Tibial artery (tissue), 4 donors: ENCODE measurements at regions of chr7 and their contacts with region 1.

Region 1: DNA sequence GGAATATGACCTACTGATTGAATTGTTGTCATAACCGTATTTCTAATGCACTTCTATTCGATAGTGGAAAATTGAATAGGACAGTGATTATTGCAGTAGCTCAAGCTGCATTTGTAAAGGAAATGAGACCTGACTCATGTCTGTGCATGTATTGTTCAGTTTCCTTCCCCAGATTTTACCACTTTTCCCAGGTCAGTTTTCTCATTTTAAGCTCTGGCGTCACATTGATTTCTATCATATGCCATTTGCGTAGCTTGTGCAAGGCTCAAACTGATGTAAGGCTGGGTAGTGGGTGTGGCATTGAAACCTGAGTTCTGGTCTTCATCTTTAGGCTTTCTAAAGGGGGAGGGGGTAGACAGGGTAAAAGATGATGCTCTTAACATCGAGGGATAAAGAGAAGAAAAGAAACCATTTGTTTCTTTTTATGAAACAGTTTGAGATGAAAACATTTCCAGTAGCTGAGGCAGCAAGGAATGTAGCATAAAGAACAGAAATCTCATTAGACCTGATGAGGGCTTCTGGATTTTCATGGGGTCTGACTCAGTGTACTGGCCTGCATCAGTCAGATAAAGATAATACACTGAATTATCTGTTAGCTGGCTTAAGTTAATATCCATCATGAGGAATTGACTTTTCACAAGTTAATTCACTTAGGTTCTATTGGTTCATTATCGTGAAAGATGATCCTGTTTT is 182.3 kb upstream of the CDCA7L start:
- DNase-seq: no peak
- H3K4me3 ChIP-seq: no peak overlapping the region
- H3K27ac ChIP-seq: no peak overlapping the region
- H3K4me1 ChIP-seq: peaks cover 0 to 13% (median 2%) of the 10 kb centered on the region in 4 donors
- H3K27me3 ChIP-seq: no peaks in the 10 kb centered on the region
- CTCF ChIP-seq: no peak

Region 2: DNA sequence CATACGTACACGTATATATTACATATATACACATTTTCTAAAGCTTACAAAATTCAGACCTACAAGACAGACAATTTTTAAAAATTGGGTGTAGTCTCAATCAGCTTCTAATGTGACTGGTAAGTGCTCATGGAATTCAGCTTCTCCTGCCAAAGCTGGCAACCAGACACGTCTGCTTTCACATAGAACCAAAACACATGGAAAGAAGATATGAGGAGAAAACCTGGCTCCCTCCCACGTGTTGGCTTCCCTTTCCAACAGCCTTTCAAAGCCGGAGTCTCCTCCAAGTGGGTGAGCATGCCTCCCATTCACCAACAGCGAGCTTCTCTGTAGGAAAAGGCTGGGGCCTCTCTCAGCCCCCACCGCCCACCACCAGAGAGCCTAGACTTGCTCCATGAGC is 215.7 kb before region 1 on chr7:
- intact Hi-C with region 1: no loop called
- DNase-seq: no peak
- H3K4me3 ChIP-seq: no peak overlapping the region
- H3K27ac ChIP-seq: no peak overlapping the region
- H3K4me1 ChIP-seq: no peaks in the 10 kb centered on the region
- H3K27me3 ChIP-seq: no peaks in the 10 kb centered on the region
- CTCF ChIP-seq: no peak

Region 3: GRCh38 chr7:22667562-22668239 is 539.7 kb after region 1 on chr7:
- intact Hi-C with region 1: loop called (anchors 5 kb)
- DNase-seq: no peak
- H3K4me3 ChIP-seq: no peak overlapping the region
- H3K27ac ChIP-seq: no peak overlapping the region
- H3K4me1 ChIP-seq: no peaks in the 10 kb centered on the region
- H3K27me3 ChIP-seq: no peaks in the 10 kb centered on the region
- CTCF ChIP-seq: no peak